Right ventricle myocardium inferior (tissue), 1 donor: ENCODE measurements at regions of chr16 and their contacts with region 1.

Region 1: DNA sequence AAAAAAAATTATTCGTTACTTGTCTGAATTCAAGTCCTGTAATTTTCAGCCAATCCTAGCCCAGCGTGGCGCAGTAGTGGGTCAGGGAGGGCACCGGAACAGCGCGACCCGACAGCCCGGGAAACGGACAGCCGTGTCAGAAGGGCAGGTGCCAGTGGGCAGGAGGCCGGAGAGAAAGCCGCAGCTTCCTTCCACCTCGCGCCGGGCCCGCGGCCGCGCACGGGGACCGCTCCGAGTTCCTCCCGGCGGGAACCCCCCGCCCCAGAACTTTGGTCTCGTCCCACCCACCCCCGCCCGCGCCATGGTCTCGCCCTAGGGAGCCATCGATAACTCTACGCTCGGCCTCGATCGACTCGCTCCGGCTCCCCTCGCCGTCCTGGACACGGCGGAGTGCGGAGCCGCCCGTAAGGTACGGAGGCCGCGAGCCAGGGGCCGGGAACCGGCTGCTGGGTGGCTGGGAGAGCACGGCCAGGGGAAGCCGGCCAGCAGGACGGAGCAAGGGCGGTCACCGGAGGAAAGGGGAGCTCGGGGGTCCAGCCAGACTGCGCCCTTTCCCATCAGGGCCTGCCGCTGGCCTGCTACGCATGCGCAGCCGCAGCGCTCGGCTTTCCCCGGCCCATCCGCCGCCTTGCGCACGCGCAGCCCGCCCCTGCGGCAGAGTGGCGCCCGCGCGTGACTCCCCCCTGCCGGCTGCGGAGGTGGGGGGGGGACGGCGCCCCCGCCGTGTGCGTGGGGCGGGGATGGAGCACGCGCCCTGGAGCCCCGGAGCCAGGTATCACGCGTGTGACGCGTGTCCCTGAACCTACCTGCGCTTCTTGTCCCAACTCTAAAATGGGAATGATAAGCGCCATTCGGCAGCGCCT is at the start of gene MLST8:
- DNase-seq: peak; percentile 93
- ATAC-seq: peak; percentile 89
- total RNA-seq, gene MLST8: 25.3 TPM

Region 2: GRCh38 chr16:1971796-1972489 is 233.4 kb before region 1 on chr16 and contains the start of gene TBL3:
- intact Hi-C with region 1: no loop called
- DNase-seq: peak; percentile 97
- ATAC-seq: peak; percentile 95
- total RNA-seq, gene TBL3: 24.9 TPM

Region 3: GRCh38 chr16:2155091-2156021 is 50.0 kb before region 1 on chr16 and contains the start of gene TRAF7:
- intact Hi-C with region 1: loop called (anchors 5 kb)
- DNase-seq: peak; percentile 99
- ATAC-seq: peak; percentile 95
- total RNA-seq, gene TRAF7: 27.3 TPM

Region 4: DNA sequence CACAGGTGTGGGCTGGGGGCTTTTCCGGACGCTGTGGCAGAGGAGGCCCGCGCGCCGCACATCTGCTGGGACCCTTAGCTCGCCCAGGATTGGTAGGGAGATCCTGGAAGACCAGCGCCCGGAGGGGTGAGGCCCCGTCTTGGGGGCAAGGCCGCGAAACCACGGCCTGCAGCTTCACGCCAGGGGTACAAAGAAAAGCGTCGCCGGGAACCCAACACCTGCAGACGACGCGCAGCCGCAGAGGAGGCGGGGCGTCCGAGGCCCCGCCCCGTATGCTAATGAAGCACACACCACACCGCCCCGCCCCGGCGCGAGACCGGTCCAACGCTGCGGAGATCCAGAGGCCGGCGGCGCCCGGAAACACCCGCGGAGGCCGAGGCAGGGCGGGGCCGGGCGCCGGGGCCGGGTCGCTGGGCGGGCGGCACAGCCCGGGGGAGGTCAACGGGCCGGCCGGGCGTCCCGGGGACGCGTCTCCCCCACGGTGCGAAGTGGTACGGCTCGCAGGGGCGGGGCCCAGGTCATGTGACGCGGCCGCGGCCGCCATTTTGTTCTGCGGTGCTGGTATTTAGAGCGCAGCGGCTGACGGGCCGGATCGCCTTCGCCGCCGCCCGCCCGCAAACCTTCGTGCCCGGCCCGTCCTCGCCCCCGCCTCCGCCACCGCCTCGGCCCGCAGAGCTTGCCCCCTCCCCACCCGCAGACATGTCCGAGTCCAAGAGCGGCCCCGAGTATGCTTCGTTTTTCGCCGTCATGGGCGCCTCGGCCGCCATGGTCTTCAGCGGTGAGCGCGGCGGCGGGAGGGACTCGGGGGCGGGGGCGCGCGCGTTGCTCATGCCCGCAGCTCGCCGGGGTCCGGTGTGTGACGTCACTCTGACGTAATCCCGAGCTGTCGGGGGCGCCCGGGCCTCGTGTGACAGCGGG is 308.3 kb after region 1 on chr16 and contains the start of gene ATP6V0C:
- intact Hi-C with region 1: loop called (anchors 5 kb)
- DNase-seq: peak; percentile 97
- ATAC-seq: peak; percentile 87
- total RNA-seq, gene ATP6V0C: 137 TPM